Cardiac septum (tissue), 1 donor: ENCODE measurements at regions of chr20 and their contacts with region 1.

Region 1: DNA sequence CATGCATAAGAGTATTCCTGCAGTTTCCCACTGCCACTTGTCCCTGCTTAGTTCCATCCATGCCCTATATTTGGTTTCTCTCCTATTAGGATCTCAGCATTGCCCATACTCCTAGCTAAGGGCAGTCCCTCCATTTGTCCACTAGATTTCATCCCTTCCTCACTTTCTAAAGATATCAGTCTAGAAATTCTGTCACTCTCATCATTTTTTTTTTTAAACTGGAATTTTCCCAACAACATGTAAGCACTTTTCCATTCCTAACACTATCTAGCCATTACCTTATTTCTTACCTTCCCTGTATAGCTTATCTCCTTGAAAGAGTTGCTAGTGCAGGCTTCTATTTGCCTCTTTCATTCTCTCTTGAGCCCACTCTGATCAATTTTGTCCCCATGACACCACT is 312.2 kb downstream of the BTBD3 start:
- DNase-seq: no peak

Region 2: DNA sequence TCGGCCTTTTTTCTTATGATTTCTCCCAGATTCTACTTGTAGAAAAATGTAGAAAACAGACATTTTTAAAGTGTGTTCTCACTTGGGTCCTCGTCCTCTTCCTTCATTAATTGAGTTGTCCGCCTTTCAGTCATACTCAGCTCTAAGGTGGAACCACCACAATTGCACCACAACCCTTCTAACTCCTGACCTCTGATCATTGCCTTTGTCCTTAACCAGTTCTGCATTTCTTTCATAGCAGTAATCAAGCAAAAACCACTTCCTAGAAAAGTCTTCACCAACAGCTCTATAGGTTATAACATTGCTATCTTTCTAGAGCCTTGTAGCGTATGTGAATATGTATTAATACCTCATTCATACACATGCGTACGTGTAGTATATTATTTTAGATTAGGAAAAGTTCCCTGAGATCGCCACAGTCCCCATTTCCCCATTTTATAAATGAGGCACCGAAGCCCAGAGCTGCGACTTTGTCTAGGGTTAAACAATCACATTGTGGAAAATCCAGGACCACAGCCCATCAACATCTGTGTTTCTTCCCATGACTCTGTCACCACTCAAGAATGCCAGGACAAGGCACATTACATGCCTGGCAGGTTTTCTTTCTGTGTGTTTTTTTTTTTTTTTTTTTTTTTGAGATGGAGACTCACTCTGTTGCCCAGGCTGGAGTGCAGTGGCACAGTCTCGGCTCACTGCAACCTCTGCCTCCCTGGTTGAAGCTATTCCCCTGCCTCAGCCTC is 136.7 kb before region 1 on chr20:
- intact Hi-C with region 1: no loop called
- DNase-seq: no peak

Region 3: DNA sequence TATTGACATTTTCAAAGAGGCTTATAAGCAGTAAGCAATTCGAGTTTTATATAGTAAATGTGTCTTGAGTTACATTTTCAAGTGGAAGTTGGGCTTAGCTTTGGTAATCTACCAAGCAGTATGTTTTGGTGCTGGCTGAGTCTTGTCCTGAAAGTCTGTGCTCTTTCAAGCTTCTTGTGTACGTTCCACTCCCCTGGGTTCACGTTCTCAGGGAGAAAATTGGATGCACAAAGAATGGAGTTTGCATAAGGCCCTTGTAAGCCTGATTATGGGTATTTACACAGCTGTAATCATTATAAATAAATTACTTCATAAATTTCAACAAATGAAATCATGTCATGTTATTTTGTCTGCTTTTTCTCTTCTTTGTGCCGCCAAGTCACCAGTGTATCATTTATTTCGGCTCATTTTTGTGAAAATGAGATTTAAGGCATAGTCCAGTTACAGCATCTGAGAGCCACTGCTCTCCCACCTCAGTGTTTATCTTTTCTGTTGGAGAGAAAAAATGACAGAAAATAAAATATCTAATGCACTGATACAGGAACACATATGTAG is 49.7 kb before region 1 on chr20:
- intact Hi-C with region 1: loop called (anchors 5 kb)
- DNase-seq: no peak